ENCODE measurements at regions of chr2 and their contacts with region 1.

Region 1: DNA sequence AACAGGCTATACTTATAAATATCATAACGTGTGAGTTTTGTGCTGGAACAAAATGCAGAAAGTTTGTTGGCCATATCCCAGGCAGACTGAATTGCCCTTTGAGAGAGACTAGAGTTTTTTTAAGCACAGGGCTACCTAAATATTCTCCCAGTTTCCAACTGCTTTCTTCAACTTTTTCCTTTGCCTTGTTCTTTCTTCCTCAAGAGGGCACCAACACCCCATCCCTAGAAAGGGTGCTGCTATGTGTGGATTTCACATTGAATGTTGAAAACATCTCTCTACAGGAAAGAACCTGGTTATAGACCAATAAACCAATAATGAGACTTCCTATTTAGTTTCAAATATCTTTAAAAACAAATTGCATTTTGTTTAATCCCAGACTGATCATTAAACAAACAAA is 87.9 kb downstream of the ICOS start:
- DNase-seq: peak; percentile 81
- H3K4me3 ChIP-seq: no peak overlapping the region
- H3K27ac ChIP-seq: no peak overlapping the region
- H3K4me1 ChIP-seq: peaks cover 13% of the 10 kb centered on the region
- H3K27me3 ChIP-seq: no peaks in the 10 kb centered on the region
- CTCF ChIP-seq: peak; percentile 54 to 59
- POLR2A ChIP-seq: no peak

Region 2: DNA sequence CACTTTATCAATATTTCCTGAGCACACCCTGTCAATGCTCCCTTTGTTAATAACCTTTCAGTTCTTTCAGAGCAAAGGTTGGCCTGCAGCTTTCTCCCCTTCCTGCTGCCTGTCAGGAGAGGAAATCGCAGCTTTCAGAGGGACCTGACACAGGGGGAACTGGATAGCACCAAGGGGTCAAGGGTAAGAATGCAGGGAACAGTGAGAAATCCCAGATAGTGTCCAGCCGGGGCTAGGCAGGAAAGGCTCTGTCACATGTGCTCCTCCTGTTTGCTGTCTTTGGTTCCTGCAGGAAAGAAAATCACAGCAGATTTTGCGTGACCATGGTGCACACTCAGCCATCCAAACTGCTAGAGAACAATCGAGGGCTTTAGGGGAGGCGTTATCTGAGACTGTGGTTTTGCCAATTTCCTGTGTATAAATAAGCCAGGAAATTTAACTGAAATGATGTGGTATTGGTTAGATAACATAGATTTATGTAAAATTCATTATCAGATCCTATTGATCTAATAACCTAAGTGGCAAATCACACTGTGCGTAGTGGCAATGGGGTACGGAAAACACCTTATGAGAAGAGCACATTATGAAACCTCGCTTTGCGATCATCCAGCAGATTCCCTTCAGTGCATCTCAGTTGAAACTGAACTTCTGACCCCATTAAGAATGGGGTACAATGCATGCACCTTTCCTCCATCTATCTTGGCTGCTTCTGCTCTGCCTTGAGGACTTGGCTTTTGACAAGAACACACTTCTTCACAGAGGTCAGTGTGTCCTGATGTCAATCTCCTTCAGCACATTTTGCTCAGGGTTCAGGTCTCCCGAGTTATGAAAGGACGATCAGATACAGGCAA is 90.0 kb after region 1 on chr2:
- CTCF ChIA-PET with region 1: interaction called, 6 read pairs
- POLR2A ChIA-PET with region 1: no interaction called
- dilution Hi-C with region 1: no loop called
- intact Hi-C with region 1: loop called (anchors 1 kb)
- DNase-seq: peak; percentile 99
- H3K4me3 ChIP-seq: peak overlapping the region in 1 of 3 experiments; percentile 11
- H3K27ac ChIP-seq: peak overlapping the region; percentile 86
- H3K4me1 ChIP-seq: peaks cover 77% of the 10 kb centered on the region
- H3K27me3 ChIP-seq: no peaks in the 10 kb centered on the region
- CTCF ChIP-seq: no peak
- POLR2A ChIP-seq: peak; percentile 73

Region 3: GRCh38 chr2:204177977-204178540 is 153.6 kb after region 1 on chr2:
- CTCF ChIA-PET with region 1: interaction called, 43 read pairs
- POLR2A ChIA-PET with region 1: no interaction called
- dilution Hi-C with region 1: no loop called
- intact Hi-C with region 1: loop called (anchors 1 kb)
- DNase-seq: peak; percentile 34
- H3K4me3 ChIP-seq: no peak overlapping the region
- H3K27ac ChIP-seq: no peak overlapping the region
- H3K4me1 ChIP-seq: no peaks in the 10 kb centered on the region
- H3K27me3 ChIP-seq: peaks cover 5 to 8% of the 10 kb centered on the region in 2 experiments
- CTCF ChIP-seq: peak; percentile 61 to 63
- POLR2A ChIP-seq: no peak

Region 4: GRCh38 chr2:204452464-204453023 is 428.0 kb after region 1 on chr2:
- CTCF ChIA-PET with region 1: no interaction called
- POLR2A ChIA-PET with region 1: no interaction called
- dilution Hi-C with region 1: no loop called
- intact Hi-C with region 1: loop called (anchors 1 kb)
- DNase-seq: peak; percentile 99
- H3K4me3 ChIP-seq: no peak overlapping the region
- H3K27ac ChIP-seq: peak overlapping the region; percentile 92
- H3K4me1 ChIP-seq: peaks cover 24% of the 10 kb centered on the region
- H3K27me3 ChIP-seq: no peaks in the 10 kb centered on the region
- CTCF ChIP-seq: no peak
- POLR2A ChIP-seq: no peak

Region 5: DNA sequence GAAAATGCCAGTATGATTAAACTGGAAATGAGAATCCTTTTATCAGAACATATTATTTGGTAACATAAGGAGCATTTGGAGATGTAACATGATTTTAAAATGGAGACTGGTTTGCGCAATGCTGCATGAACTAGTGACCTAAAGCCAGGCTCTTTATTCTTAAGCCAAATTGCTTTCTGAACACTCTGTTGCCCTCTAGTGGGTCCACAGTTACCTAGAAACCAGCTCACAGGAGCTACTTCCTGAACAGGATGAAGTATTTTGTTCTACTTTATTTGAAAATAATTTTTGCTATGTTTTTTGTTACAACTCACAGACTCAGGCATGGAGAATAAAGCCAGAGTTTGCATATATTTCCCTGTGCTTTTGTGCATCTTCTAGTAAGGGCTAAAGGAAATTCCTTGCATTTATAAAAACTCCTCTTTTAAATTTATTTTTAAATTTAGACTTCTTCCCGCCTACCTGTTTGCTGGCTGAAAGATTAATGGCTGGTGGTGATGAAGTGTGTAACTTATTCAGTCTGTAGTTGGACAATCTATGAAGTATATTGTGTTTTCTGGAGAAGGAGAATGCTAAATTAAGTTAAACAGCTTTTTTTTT is 667.5 kb after region 1 on chr2:
- CTCF ChIA-PET with region 1: interaction called, 9 read pairs
- POLR2A ChIA-PET with region 1: no interaction called
- dilution Hi-C with region 1: no loop called
- intact Hi-C with region 1: loop called (anchors 1 kb)
- DNase-seq: peak; percentile 90
- H3K4me3 ChIP-seq: no peak overlapping the region
- H3K27ac ChIP-seq: peak overlapping the region; percentile 36
- H3K4me1 ChIP-seq: peaks cover 18% of the 10 kb centered on the region
- H3K27me3 ChIP-seq: no peaks in the 10 kb centered on the region
- CTCF ChIP-seq: peak; percentile 68 to 72
- POLR2A ChIP-seq: no peak

Region 6: DNA sequence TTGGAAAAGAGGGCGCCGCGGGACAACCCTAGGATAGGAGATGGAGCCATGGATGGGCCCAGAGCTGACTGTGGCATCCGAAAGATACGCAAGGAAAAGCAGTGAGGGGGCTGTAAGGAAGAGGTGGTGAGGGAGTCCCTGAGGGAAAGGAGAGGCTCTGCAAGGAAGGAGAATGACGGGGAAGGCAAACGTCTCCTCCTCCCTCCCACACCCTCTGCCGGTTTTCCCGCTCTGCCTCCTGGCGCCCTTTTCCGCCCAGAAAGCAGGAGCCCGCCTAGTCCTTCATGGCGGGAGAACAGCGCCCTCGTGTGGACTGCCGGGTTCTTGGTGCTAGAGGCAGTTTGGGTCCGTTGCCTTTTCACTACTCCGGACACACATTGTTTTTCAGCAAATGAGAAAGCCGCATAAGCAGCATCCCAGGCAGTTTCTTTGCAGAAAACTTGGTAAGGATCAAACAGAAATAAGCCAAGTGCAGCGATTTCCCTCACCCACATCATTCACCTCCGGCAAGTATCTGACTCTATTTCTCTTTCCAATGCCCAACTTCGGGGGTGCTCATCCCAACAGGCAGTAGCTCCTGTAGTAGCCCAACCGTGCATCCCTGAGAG is 1861.1 kb after region 1 on chr2:
- CTCF ChIA-PET with region 1: no interaction called
- POLR2A ChIA-PET with region 1: no interaction called
- dilution Hi-C with region 1: no loop called
- intact Hi-C with region 1: loop called (anchors 5 kb)
- DNase-seq: peak; percentile 76
- H3K4me3 ChIP-seq: no peak overlapping the region
- H3K27ac ChIP-seq: no peak overlapping the region
- H3K4me1 ChIP-seq: peaks cover 5% of the 10 kb centered on the region
- H3K27me3 ChIP-seq: peaks cover 0 to 2% of the 10 kb centered on the region in 2 experiments
- CTCF ChIP-seq: peak; percentile 90 to 93
- POLR2A ChIP-seq: no peak

Measured in endothelial cell of umbilical vein (primary cell).